ENCODE measurements at regions of chr11 and their contacts with region 1.

Region 1: DNA sequence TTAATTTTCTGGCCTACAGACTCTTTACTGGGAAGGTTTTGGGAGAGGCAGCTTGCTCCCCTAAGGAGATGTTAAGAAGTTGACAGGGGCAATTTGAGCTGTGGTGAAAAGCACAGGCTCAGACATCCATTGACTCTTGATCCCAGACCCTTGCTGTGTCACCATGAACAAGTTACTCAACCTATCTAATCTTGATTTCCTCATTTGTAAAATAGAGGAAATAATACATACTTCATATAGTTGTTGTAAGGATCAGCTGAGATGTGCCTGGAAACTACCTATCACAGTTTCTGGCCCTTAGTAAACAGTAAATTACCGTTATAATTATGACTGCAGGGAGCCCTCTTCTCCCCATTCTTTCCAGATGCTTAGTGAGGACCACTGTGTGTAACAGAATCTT is 16.6 kb upstream of the SCGB1D4 start:
- DNase-seq: no peak
- ATAC-seq: no peak
- H3K4me3 ChIP-seq: no peak overlapping the region
- H3K27ac ChIP-seq: no peak overlapping the region
- H3K4me1 ChIP-seq: no peaks in the 10 kb centered on the region
- H3K27me3 ChIP-seq: peaks cover 50% of the 10 kb centered on the region
- CTCF ChIP-seq: no peak

Region 2: DNA sequence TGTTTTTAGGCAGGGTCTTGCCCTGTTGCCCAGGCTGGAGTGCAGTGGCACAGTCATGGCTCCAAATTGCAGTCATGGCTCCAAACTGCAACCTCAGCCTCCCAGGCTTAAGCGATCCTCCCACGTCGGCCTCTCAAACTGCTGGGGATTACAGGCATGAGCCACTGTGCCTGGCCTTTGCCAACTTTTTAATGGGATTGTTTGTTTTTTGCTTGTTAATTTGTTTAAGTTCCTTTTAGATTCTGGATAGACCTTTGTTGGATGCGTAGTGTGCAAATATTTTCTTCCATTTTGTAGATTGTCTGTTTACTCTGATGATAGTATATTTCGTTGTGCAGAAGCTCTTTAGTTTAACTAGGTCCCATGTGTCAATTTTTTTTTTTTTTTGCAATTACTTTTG is 135.4 kb before region 1 on chr11:
- CTCF ChIA-PET with region 1: interaction called, 10 read pairs
- POLR2A ChIA-PET with region 1: no interaction called
- intact Hi-C with region 1: no loop called
- DNase-seq: no peak
- ATAC-seq: peak; percentile 42
- H3K4me3 ChIP-seq: no peak overlapping the region
- H3K27ac ChIP-seq: no peak overlapping the region
- H3K4me1 ChIP-seq: no peaks in the 10 kb centered on the region
- H3K27me3 ChIP-seq: peaks cover 87% of the 10 kb centered on the region
- CTCF ChIP-seq: no peak

Region 3: DNA sequence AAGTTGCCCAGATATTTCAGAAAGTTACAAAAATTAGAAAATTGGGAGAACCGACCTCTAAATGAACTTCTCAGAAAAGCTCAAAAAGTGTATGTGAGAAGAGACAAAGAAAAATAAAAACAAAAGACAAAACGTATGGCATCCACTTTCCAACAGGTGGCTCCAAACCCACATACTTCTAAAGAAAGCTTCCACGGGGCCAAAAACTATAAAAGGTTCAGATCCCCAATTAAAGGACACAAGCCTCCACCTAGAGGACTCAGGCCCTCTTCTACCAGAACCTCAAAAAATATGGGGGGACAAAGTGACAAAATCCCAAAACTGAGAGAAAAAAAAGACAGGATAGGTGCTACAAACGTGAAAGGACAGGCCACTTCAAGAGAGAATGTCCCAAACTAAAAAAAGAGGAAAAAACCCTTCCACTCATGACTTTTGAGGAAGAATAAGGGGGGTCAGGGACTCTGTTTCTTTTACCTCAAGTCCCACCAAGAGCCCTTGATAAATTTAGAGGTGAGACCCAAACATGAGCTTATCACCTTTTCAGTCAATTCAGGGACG is 98.2 kb before region 1 on chr11:
- CTCF ChIA-PET with region 1: interaction called, 5 read pairs
- POLR2A ChIA-PET with region 1: no interaction called
- intact Hi-C with region 1: loop called (anchors 1 kb)
- DNase-seq: peak; percentile 66
- ATAC-seq: peak; percentile 38; the same call in 1 of the 2 replicates
- H3K4me3 ChIP-seq: no peak overlapping the region
- H3K27ac ChIP-seq: no peak overlapping the region
- H3K4me1 ChIP-seq: no peaks in the 10 kb centered on the region
- H3K27me3 ChIP-seq: peaks cover 19% of the 10 kb centered on the region; the same call in 1 of the 2 replicates
- CTCF ChIP-seq: peak; percentile 89

Region 4: DNA sequence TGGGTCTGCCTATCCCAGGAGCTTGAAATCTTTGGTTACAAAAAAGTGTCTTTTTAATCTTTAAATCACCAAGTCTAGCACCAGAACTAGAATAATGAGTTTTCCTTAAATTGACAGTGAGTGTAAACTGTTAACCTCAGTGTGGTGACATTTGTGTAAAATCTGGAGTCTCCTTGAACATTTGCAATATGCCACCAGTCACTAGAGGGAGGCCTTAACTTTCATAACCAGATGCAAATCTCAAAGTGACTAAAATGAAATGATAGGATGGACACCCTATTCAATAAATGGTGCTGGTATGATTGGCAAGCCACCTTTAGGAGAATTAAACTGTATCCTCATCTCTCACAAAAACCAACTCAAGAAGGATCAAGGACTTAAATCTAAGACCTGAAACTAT is 81.7 kb before region 1 on chr11:
- CTCF ChIA-PET with region 1: interaction called, 3 read pairs
- POLR2A ChIA-PET with region 1: no interaction called
- intact Hi-C with region 1: loop called (anchors 1 kb)
- DNase-seq: peak; percentile 37
- ATAC-seq: peak; percentile 37; the same call in 1 of the 2 replicates
- H3K4me3 ChIP-seq: no peak overlapping the region
- H3K27ac ChIP-seq: no peak overlapping the region
- H3K4me1 ChIP-seq: no peaks in the 10 kb centered on the region
- H3K27me3 ChIP-seq: peaks cover 37% of the 10 kb centered on the region
- CTCF ChIP-seq: peak; percentile 54

Region 5: GRCh38 chr11:62645956-62646824 is 330.8 kb after region 1 on chr11 and contains the start of gene GANAB:
- CTCF ChIA-PET with region 1: no interaction called
- POLR2A ChIA-PET with region 1: no interaction called
- intact Hi-C with region 1: no loop called
- DNase-seq: peak; percentile 99
- ATAC-seq: peak; percentile 98
- H3K4me3 ChIP-seq: peak within 1 kb of the TSS; percentile 95
- H3K27ac ChIP-seq: peak within 1 kb of the TSS; percentile 64
- H3K4me1 ChIP-seq: peaks cover 10% of the 10 kb centered on the region
- H3K27me3 ChIP-seq: no peaks in the 10 kb centered on the region
- CTCF ChIP-seq: no peak
- total RNA-seq, gene GANAB: 274 and 290 TPM in 2 replicates

Measured in PC-3 (cell line).